Calu3 (cell line): ENCODE measurements at regions of chr3 and their contacts with region 1.

Region 1: GRCh38 chr3:141249041-141249440 is 17.4 kb downstream of the PXYLP1 start:
- DNase-seq: no peak
- H3K4me3 Mint-ChIP-seq: no peak overlapping the region
- H3K27ac Mint-ChIP-seq: no peak overlapping the region
- H3K4me1 Mint-ChIP-seq: no peaks in the 10 kb centered on the region
- H3K27me3 Mint-ChIP-seq: no peaks in the 10 kb centered on the region
- CTCF ChIP-seq: no peak

Region 2: DNA sequence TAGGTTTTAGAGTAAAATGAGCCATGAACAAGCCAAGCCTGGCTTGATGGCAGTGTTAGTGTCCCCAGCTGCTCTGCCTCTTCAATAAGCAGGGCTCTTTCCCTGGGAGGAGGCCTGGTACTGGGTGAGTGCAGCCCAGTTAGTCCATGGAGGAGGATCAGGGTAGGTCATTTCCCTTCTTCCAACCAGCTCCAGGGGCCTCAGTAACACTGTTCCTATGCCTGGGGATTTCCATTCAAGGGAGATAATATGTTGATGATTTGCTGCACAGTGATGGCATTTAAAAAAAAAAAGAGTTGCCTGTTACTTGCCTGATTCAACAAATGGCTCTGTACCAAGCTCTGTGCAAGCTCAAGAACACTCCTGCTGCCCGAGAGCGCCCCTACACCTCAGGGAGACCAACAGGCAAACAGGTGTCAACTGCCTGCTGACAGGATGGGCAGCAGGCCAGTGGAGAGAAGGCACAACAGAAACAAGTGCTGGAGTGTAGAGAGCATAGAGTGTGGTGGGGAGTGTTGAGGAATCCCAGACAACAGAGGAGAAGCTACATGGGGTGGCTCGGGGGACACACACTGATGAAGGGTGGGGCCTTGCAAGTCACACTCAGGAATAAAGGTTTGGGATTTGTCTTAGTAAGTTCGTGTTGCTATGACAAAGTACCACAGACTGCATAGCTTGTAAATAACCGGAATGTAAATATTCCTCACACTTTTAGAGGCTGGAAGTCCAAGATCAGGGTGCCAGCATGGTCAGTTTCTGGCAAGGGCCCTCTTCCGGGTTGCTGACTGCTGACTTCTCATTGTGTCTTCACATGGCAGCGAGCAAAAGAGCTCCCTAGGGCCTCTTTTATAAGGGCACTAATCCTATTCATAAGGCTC is 96.0 kb before region 1 on chr3:
- CTCF ChIA-PET with region 1: no interaction called
- intact Hi-C with region 1: no loop called
- DNase-seq: no peak
- H3K4me3 Mint-ChIP-seq: no peak overlapping the region
- H3K27ac Mint-ChIP-seq: no peak overlapping the region
- H3K4me1 Mint-ChIP-seq: no peaks in the 10 kb centered on the region
- H3K27me3 Mint-ChIP-seq: peaks cover 58% of the 10 kb centered on the region
- CTCF ChIP-seq: no peak

Region 3: GRCh38 chr3:141204343-141204742 is 44.7 kb before region 1 on chr3:
- CTCF ChIA-PET with region 1: no interaction called
- intact Hi-C with region 1: no loop called
- DNase-seq: no peak
- H3K4me3 Mint-ChIP-seq: no peak overlapping the region
- H3K27ac Mint-ChIP-seq: no peak overlapping the region
- H3K4me1 Mint-ChIP-seq: no peaks in the 10 kb centered on the region
- H3K27me3 Mint-ChIP-seq: peaks cover 35% of the 10 kb centered on the region
- CTCF ChIP-seq: no peak

Region 4: GRCh38 chr3:141828487-141829268 is 579.6 kb after region 1 on chr3:
- CTCF ChIA-PET with region 1: interaction called, 18 read pairs
- intact Hi-C with region 1: no loop called
- DNase-seq: peak; percentile 54
- H3K4me3 Mint-ChIP-seq: no peak overlapping the region
- H3K27ac Mint-ChIP-seq: no peak overlapping the region
- H3K4me1 Mint-ChIP-seq: no peaks in the 10 kb centered on the region
- H3K27me3 Mint-ChIP-seq: no peaks in the 10 kb centered on the region
- CTCF ChIP-seq: no peak